ENCODE measurements at regions of chr5 and their contacts with region 1.

Region 1: GRCh38 chr5:150700594-150701293 is at the start of gene RBM22:
- DNase-seq: peak; percentile 95
- H3K4me3 Mint-ChIP-seq: no peak within 1 kb of the TSS
- H3K27ac Mint-ChIP-seq: no peak within 1 kb of the TSS
- H3K4me1 Mint-ChIP-seq: peaks cover 8% of the 10 kb centered on the region
- H3K27me3 Mint-ChIP-seq: no peaks in the 10 kb centered on the region
- total RNA-seq, gene RBM22: 86.2 to 88.2 TPM

Region 2: GRCh38 chr5:149765932-149766331 is 934.8 kb before region 1 on chr5:
- CTCF ChIA-PET with region 1: no interaction called
- intact Hi-C with region 1: no loop called
- DNase-seq: no peak
- H3K4me3 Mint-ChIP-seq: no peak overlapping the region
- H3K27ac Mint-ChIP-seq: no peak overlapping the region
- H3K4me1 Mint-ChIP-seq: no peaks in the 10 kb centered on the region
- H3K27me3 Mint-ChIP-seq: no peaks in the 10 kb centered on the region

Region 3: DNA sequence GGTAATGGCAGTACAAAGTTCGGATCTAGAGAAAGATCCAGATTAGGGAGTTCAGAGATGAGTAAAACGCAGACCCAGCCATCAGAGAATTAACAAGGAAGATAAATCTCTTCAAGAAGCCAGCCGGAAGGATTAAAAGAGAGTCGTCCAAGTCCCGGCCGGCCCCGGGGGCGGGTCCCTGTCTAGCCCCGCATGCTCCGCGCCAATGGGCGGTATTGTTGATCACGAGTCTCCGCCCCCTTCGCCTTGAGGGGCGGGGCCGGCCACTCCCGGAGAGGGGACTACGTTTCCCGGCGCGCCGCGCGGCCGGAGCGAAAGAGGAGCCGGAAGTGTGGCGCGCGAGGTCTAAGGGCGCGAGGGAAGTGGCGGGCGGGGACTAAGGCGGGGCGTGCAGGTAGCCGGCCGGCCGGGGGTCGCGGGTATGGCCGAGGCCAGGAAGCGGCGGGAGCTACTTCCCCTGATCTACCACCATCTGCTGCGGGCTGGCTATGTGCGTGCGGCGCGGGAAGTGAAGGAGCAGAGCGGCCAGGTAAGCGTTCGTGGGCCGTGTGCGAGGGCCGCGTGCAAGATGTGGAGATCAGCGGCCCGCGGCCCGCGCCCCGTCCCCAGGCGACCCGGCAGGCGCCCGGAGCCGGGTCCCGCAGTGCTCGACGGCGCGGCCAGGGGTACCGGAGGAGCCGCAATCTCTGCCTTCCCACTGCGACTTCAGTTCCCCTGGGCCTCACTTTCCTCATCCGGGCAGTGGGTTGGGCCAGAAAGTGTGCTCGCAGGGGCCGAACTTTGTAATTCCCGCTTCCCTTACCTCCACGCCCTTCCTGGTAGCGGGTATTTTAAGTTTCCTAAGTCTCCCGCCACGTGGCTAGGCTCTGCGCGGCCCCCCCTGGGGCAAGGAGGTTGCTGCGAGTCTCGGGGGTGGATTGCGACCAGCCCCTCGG is 343.2 kb before region 1 on chr5 and contains the start of gene TCOF1:
- CTCF ChIA-PET with region 1: no interaction called
- intact Hi-C with region 1: loop called (anchors 1 kb)
- DNase-seq: peak; percentile 98
- H3K4me3 Mint-ChIP-seq: peak within 1 kb of the TSS; percentile 87
- H3K27ac Mint-ChIP-seq: peak within 1 kb of the TSS; percentile 82
- H3K4me1 Mint-ChIP-seq: peaks cover 41% of the 10 kb centered on the region
- H3K27me3 Mint-ChIP-seq: no peaks in the 10 kb centered on the region
- total RNA-seq, gene TCOF1: 114 to 115 TPM

Region 4: DNA sequence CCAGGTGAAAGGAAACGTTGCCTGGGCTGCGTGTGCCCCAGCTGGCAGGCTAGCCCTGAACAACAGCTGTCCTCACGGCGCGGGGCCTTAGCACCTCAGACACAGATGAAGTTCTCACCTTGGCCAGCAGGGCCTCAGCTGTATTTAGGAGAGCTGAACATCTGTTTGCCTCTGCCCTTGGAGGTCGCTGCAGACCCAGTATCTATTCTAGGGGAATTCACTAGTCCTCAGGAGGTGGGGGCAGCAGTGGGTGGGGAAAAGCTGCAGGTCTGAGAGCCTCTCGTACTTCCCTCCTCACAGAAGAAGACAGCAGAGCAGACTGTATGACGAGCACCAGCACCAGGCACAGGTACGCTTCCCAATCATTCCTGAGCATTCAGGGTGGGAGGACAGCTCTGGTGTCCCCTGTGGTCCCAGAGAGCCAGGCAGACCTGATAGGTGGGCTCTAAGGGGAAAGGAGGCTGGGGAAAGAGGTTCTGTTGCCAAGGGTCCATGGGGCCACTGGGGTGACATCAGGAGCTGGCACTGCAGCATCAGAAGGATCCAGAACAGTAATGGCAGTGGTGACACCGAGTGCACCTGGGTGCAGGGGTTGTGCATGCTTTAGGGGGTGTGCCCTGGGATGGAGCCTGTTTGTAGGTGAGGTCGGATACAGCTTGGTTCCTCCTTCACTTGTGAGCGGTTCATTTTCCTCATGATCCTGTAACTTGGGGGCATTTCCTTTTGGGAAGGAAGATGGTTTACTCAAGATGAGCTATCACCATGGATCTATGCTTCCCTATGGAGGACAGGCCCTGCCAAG is 301.8 kb before region 1 on chr5:
- CTCF ChIA-PET with region 1: no interaction called
- intact Hi-C with region 1: no loop called
- DNase-seq: no peak
- H3K4me3 Mint-ChIP-seq: no peak overlapping the region
- H3K27ac Mint-ChIP-seq: peak overlapping the region; percentile 41
- H3K4me1 Mint-ChIP-seq: no peaks in the 10 kb centered on the region
- H3K27me3 Mint-ChIP-seq: no peaks in the 10 kb centered on the region

Region 5: DNA sequence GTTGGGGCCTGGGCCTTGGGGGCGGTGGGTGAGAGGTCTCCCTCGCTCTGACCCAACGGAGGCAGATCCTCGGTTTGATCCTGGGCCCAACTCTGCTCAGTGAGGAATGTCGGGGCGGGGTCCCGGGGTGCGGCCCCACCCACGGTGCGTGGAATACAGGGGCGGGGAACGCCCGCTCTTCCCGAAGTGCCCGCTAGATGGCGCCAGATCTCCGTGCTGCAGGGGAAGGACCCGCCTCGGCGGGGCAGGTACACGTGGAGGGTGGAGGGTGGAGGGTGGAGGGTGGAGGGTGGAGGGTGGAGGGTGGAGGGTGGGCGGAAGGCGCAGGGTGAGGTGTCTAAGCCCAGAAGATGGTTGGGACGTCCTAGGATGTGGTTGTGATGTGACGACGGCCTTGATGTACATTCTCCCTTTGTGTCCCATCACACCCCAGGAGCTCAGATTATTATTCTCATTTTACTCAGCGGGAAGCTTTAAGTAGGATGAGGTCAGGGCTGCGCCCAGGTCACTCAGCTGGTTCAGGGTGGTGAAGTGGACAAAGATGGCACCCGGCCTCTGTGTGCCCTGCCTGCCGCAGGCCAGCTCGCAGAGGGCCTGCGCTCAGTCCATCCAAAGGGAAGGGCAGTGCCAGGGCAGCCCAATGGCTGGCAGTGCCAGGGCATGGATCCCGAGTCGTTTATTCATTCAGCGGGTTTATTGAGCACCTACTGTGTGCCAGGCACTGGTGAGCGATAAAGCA is 241.8 kb before region 1 on chr5:
- CTCF ChIA-PET with region 1: interaction called, 5 read pairs
- intact Hi-C with region 1: loop called (anchors 2 kb)
- DNase-seq: peak; percentile 88
- H3K4me3 Mint-ChIP-seq: peak overlapping the region; percentile 45
- H3K27ac Mint-ChIP-seq: no peak overlapping the region
- H3K4me1 Mint-ChIP-seq: peaks cover 32% of the 10 kb centered on the region
- H3K27me3 Mint-ChIP-seq: no peaks in the 10 kb centered on the region

Region 6: GRCh38 chr5:150640311-150641005 is 60.3 kb before region 1 on chr5 and contains the start of gene SYNPO:
- CTCF ChIA-PET with region 1: no interaction called
- intact Hi-C with region 1: no loop called
- DNase-seq: no peak
- H3K4me3 Mint-ChIP-seq: no peak within 1 kb of the TSS
- H3K27ac Mint-ChIP-seq: no peak within 1 kb of the TSS
- H3K4me1 Mint-ChIP-seq: no peaks in the 10 kb centered on the region
- H3K27me3 Mint-ChIP-seq: peaks cover 5% of the 10 kb centered on the region
- total RNA-seq, gene SYNPO: 0.14 to 0.17 TPM

Region 7: GRCh38 chr5:150689120-150689519 is 11.6 kb before region 1 on chr5:
- CTCF ChIA-PET with region 1: interaction called, 15 read pairs
- intact Hi-C with region 1: no loop called
- DNase-seq: no peak
- H3K4me3 Mint-ChIP-seq: no peak overlapping the region
- H3K27ac Mint-ChIP-seq: no peak overlapping the region
- H3K4me1 Mint-ChIP-seq: no peaks in the 10 kb centered on the region
- H3K27me3 Mint-ChIP-seq: no peaks in the 10 kb centered on the region

Region 8: GRCh38 chr5:150789943-150790611 is 89.3 kb after region 1 on chr5:
- CTCF ChIA-PET with region 1: interaction called, 14 read pairs
- intact Hi-C with region 1: loop called (anchors 1 kb)
- DNase-seq: peak; percentile 92
- H3K4me3 Mint-ChIP-seq: peak overlapping the region; percentile 64
- H3K27ac Mint-ChIP-seq: peak overlapping the region; percentile 97
- H3K4me1 Mint-ChIP-seq: peaks cover 65% of the 10 kb centered on the region
- H3K27me3 Mint-ChIP-seq: no peaks in the 10 kb centered on the region

Region 9: GRCh38 chr5:150931368-150931965 is 230.7 kb after region 1 on chr5:
- CTCF ChIA-PET with region 1: no interaction called
- intact Hi-C with region 1: no loop called
- DNase-seq: no peak
- H3K4me3 Mint-ChIP-seq: no peak overlapping the region
- H3K27ac Mint-ChIP-seq: no peak overlapping the region
- H3K4me1 Mint-ChIP-seq: no peaks in the 10 kb centered on the region
- H3K27me3 Mint-ChIP-seq: no peaks in the 10 kb centered on the region

Region 10: DNA sequence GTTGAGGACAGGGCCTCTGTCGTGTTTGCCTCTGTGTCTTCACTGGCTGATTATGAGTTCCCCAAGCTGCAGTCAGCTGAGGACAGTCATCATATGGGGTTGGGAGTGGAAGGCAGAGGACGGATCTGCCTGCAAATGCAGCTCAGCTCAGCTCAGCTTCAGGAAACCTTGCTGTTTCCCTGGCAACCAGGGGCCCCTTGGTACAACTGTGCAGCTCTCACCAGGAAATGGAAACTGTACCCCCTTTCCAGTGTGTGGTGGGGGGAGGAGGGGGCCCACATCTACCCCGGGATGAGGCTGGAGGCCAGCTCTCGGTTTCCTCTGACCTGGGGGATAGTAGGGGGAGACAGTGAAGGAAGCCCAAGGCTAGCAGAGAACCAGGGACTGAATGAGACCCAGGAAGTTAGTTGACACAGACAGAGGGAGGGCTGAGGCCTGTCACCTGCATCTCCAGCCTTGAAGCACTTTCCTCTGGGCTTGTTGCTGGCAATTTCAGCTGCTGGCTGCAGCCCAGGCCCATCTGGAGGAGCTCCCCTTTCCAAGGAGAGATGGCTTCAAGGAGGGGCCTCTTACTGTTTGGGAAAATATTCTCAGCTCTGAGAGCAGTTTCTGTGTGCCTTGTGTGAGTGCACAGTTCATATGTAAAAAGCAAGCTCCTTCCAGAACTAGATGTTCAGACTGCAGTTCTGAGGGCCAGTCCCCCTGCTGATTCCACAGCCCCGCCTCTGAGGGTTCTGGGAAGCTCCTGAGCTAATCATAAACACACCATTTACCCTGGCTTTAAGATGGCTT is 449.9 kb after region 1 on chr5:
- CTCF ChIA-PET with region 1: interaction called, 4 read pairs
- intact Hi-C with region 1: loop called (anchors 5 kb)
- DNase-seq: peak; percentile 91
- H3K4me3 Mint-ChIP-seq: peak overlapping the region; percentile 64
- H3K27ac Mint-ChIP-seq: peak overlapping the region; percentile 90
- H3K4me1 Mint-ChIP-seq: peaks cover 94% of the 10 kb centered on the region
- H3K27me3 Mint-ChIP-seq: no peaks in the 10 kb centered on the region

Measured in activated naive CD4-positive, alpha-beta T cell treated with anti-CD3 and anti-CD28 coated beads for 36 hours (primary cell).